ENCODE measurements at regions of chr17 and their contacts with region 1.

Region 1: GRCh38 chr17:69246726-69247375 is 18.2 kb upstream of the ABCA10 start:
- DNase-seq: no peak
- H3K4me3 Mint-ChIP-seq: no peak overlapping the region
- H3K27ac Mint-ChIP-seq: no peak overlapping the region
- H3K4me1 Mint-ChIP-seq: no peaks in the 10 kb centered on the region
- H3K27me3 Mint-ChIP-seq: no peaks in the 10 kb centered on the region

Region 2: GRCh38 chr17:68539548-68540467 is 707.0 kb before region 1 on chr17:
- CTCF ChIA-PET with region 1: no interaction called
- intact Hi-C with region 1: loop called (anchors 10 kb)
- DNase-seq: no peak
- H3K4me3 Mint-ChIP-seq: no peak overlapping the region
- H3K27ac Mint-ChIP-seq: no peak overlapping the region
- H3K4me1 Mint-ChIP-seq: peaks cover 3% of the 10 kb centered on the region
- H3K27me3 Mint-ChIP-seq: no peaks in the 10 kb centered on the region

Region 3: DNA sequence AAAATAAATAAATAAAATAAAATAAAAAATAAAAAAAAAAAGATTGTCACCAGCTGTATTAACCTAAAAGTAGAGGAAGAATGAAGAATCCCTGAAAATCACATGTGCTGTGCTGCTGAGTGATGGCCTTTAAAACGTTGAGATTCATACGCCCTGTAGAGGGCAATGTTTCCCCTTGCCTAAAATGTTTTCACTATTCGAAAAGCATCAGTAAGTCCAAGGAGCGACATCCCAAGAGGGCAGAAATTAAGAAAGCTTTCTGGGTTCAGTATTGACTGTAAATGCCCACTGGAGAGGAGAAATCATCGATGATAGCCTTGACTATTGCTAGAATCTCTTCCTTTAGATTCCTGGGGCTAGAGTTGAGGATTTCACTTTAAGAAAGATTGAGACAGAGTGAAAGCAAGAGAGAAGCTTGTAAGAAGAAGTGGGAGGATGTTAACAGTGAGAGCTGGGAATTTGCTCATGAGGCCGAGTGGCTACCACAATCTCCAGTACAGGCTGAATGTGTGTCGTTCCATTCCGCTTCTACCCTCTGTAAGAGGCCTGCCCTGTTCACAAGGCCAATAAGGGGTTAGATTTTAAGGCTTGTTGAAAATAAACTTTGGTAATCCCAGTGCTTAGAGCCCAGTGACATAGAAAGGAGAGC is 474.9 kb before region 1 on chr17:
- CTCF ChIA-PET with region 1: interaction called, 8 read pairs
- intact Hi-C with region 1: loop called (anchors 1 kb)
- DNase-seq: no peak
- H3K4me3 Mint-ChIP-seq: no peak overlapping the region
- H3K27ac Mint-ChIP-seq: no peak overlapping the region
- H3K4me1 Mint-ChIP-seq: peaks cover 2% of the 10 kb centered on the region
- H3K27me3 Mint-ChIP-seq: no peaks in the 10 kb centered on the region

Region 4: DNA sequence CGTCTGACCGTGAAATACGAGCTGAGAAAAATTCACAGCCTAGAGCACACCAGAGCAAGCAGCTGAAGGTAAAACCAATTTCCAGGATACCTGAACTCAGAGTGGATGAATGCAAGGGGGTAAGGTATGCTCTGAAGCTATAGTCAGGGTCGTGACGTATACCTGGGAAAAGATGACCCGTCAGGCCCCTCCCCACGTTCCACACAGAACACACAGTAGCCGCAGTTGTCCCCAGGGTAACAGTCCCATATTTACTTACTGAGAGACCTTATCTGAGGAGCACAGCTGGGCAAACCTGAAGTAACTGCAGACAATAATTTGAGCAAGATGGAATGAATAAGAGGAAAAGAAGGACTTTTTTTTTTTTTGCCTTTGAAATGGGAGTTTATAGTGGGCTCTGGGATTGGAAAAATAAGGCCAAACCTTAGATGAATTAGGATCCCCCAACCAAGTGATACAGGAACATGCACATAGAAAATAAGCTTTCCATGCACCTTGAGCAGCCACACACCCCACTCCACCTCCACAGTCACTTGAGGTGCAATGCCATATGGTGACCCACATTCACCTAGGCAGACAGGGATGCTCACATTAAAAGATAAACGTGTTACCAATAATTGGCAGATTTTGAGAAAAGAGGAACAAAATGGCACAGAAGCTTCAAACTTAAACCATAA is 143.2 kb before region 1 on chr17:
- CTCF ChIA-PET with region 1: no interaction called
- intact Hi-C with region 1: no loop called
- DNase-seq: no peak
- H3K4me3 Mint-ChIP-seq: no peak overlapping the region
- H3K27ac Mint-ChIP-seq: no peak overlapping the region
- H3K4me1 Mint-ChIP-seq: no peaks in the 10 kb centered on the region
- H3K27me3 Mint-ChIP-seq: no peaks in the 10 kb centered on the region

Region 5: DNA sequence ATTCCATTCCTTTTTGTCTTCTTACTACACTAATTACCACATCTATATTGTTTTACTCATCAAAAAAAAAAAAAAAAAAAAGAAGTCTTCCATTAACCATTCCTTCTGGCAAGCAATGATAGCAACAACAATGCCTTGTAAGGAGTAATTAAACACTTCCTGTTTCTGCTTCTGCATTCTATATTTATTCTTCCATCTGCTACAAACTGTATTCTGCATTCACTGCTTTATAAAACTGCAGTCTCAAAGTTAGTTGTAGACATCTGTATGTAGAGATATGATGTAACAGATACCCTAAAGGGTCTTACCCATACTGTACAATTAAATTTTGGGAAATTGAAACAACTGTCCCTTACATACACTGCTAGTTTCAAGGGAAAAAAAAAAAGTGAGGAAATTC is 76.5 kb before region 1 on chr17:
- CTCF ChIA-PET with region 1: no interaction called
- intact Hi-C with region 1: no loop called
- DNase-seq: no peak
- H3K4me3 Mint-ChIP-seq: no peak overlapping the region
- H3K27ac Mint-ChIP-seq: no peak overlapping the region
- H3K4me1 Mint-ChIP-seq: no peaks in the 10 kb centered on the region
- H3K27me3 Mint-ChIP-seq: no peaks in the 10 kb centered on the region

Region 6: GRCh38 chr17:69607162-69607834 is 360.4 kb after region 1 on chr17:
- CTCF ChIA-PET with region 1: no interaction called
- intact Hi-C with region 1: no loop called
- DNase-seq: peak; percentile 78
- H3K4me3 Mint-ChIP-seq: no peak overlapping the region
- H3K27ac Mint-ChIP-seq: peak overlapping the region; percentile 73
- H3K4me1 Mint-ChIP-seq: peaks cover 14% of the 10 kb centered on the region
- H3K27me3 Mint-ChIP-seq: peaks cover 7% of the 10 kb centered on the region